ENCODE measurements at regions of chr6 and their contacts with region 1.

Region 1: GRCh38 chr6:151627705-151628455 is 134.1 kb downstream of the CCDC170 start:
- DNase-seq: no peak
- H3K4me3 Mint-ChIP-seq: no peak overlapping the region
- H3K27ac Mint-ChIP-seq: no peak overlapping the region
- H3K4me1 Mint-ChIP-seq: peaks cover 16% of the 10 kb centered on the region
- H3K27me3 Mint-ChIP-seq: peaks cover 9% of the 10 kb centered on the region

Region 2: DNA sequence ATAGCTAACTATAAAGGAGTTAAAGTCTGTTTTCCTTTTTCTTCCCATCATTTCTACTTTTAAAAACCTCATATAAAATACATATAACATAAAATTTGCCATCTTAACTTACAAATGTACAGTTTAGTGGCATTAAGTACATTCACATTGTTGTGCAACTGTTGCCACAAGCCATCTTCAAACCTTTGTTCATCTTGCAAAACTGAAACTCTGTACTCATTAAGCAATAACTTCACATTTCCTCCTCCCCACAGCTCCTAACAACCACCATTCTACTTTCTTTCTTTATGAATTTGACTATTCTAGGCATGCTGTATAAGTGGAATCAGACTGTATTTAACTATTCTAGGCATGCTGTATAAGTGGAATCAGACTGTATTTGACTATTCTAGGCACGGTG is 129.6 kb before region 1 on chr6:
- CTCF ChIA-PET with region 1: no interaction called
- intact Hi-C with region 1: loop called (anchors 5 kb)
- DNase-seq: peak; percentile 18
- H3K4me3 Mint-ChIP-seq: no peak overlapping the region
- H3K27ac Mint-ChIP-seq: no peak overlapping the region
- H3K4me1 Mint-ChIP-seq: peaks cover 15% of the 10 kb centered on the region
- H3K27me3 Mint-ChIP-seq: peaks cover 34% of the 10 kb centered on the region

Region 3: GRCh38 chr6:151524059-151524458 is 103.8 kb before region 1 on chr6:
- CTCF ChIA-PET with region 1: no interaction called
- intact Hi-C with region 1: no loop called
- DNase-seq: no peak
- H3K4me3 Mint-ChIP-seq: no peak overlapping the region
- H3K27ac Mint-ChIP-seq: no peak overlapping the region
- H3K4me1 Mint-ChIP-seq: no peaks in the 10 kb centered on the region
- H3K27me3 Mint-ChIP-seq: peaks cover 8% of the 10 kb centered on the region

Region 4: DNA sequence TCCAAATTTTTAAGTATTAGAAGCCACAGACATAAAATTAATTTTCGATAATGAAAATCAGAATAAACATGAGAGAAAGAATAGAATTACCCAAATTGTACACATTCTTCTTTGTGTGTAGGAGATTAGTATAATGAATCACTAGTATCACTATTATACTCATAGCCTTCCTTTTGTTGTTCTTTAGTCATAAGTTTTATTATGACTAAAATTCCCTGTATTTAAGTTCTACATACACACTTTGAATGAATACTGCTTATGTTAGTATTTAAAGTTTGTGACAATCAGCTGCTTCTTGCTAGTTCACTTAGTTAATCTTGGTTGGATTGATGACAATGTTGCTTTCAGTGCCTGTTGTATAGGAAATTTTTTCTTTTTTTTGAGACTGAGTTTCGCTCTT is 61.3 kb before region 1 on chr6:
- CTCF ChIA-PET with region 1: no interaction called
- intact Hi-C with region 1: loop called (anchors 5 kb)
- DNase-seq: no peak
- H3K4me3 Mint-ChIP-seq: no peak overlapping the region
- H3K27ac Mint-ChIP-seq: no peak overlapping the region
- H3K4me1 Mint-ChIP-seq: peaks cover 4% of the 10 kb centered on the region
- H3K27me3 Mint-ChIP-seq: peaks cover 9% of the 10 kb centered on the region

Region 5: DNA sequence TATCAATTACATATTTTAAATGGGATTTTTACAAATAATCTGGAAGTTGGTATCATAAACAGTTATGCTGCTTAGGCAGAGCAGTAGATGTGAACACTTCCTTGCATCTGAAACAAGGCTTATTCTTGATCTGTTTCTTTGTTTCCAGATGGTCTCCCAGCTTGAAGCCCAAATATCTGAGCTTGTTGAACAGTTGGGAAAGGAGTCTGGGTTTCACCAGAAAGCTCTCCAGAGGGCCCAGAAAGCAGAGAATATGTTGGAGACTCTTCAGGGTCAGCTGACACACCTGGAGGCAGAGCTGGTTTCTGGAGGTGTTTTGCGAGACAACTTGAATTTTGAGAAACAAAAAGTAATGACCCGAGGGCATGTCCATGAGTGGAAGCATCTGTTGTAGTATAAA is 42.1 kb before region 1 on chr6:
- CTCF ChIA-PET with region 1: no interaction called
- intact Hi-C with region 1: no loop called
- DNase-seq: no peak
- H3K4me3 Mint-ChIP-seq: no peak overlapping the region
- H3K27ac Mint-ChIP-seq: no peak overlapping the region
- H3K4me1 Mint-ChIP-seq: no peaks in the 10 kb centered on the region
- H3K27me3 Mint-ChIP-seq: peaks cover 16% of the 10 kb centered on the region

Region 6: GRCh38 chr6:152975204-152975915 is 1347.5 kb after region 1 on chr6:
- CTCF ChIA-PET with region 1: no interaction called
- intact Hi-C with region 1: no loop called
- DNase-seq: no peak
- H3K4me3 Mint-ChIP-seq: no peak overlapping the region
- H3K27ac Mint-ChIP-seq: no peak overlapping the region
- H3K4me1 Mint-ChIP-seq: peaks cover 45% of the 10 kb centered on the region
- H3K27me3 Mint-ChIP-seq: no peaks in the 10 kb centered on the region